Caco-2 (cell line): ENCODE measurements at regions of chr2 and their contacts with region 1.

Region 1: GRCh38 chr2:108448678-108449493 is at the start of gene GCC2:
- DNase-seq: peak; percentile 97
- H3K4me3 ChIP-seq: peak within 1 kb of the TSS; percentile 83
- H3K4me3 Mint-ChIP-seq: peak within 1 kb of the TSS; percentile 93
- H3K27ac Mint-ChIP-seq: peak within 1 kb of the TSS; percentile 94
- H3K4me1 ChIP-seq: peaks cover 7% of the 10 kb centered on the region; the same call in 1 of the 2 replicates
- H3K4me1 Mint-ChIP-seq: no peaks in the 10 kb centered on the region
- H3K27me3 ChIP-seq: no peaks in the 10 kb centered on the region
- H3K27me3 Mint-ChIP-seq: no peaks in the 10 kb centered on the region
- CTCF ChIP-seq: no peak
- total RNA-seq, gene GCC2: 46.2 and 49.9 TPM in 2 replicates

Region 2: DNA sequence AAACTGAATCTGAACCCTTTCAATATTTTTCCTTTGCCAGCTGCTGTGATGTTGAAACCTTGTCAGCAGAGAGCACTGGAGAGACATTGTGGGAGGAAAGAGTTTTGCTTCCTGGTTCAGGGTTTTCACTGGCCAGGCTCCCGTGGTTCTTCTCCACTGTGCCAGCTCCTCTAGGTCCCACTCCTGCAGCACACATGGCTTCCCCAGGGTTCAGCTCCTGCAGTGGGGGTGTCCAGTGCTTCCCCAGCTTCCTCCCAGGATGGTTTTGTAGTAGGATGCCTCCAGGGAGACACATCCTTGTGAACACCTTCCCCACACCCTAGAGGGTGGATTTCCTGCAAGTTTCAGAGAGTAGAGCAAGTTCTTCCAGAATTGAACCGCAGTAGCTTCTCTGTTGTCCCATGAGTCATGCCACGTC is 233.1 kb before region 1 on chr2:
- CTCF ChIA-PET with region 1: no interaction called
- POLR2A ChIA-PET with region 1: no interaction called
- intact Hi-C with region 1: loop called (anchors 2 kb)
- DNase-seq: peak; percentile 46 to 48
- H3K4me3 ChIP-seq: no peak overlapping the region
- H3K4me3 Mint-ChIP-seq: no peak overlapping the region
- H3K27ac Mint-ChIP-seq: no peak overlapping the region
- H3K4me1 ChIP-seq: peaks cover 5% of the 10 kb centered on the region; the same call in 1 of the 2 replicates
- H3K4me1 Mint-ChIP-seq: no peaks in the 10 kb centered on the region
- H3K27me3 ChIP-seq: no peaks in the 10 kb centered on the region
- H3K27me3 Mint-ChIP-seq: no peaks in the 10 kb centered on the region
- CTCF ChIP-seq: peak; percentile 23 to 49

Region 3: GRCh38 chr2:108377815-108378630 is 70.9 kb before region 1 on chr2 and contains the start of gene SULT1C4:
- CTCF ChIA-PET with region 1: no interaction called
- POLR2A ChIA-PET with region 1: no interaction called
- intact Hi-C with region 1: loop called (anchors 5 kb)
- DNase-seq: peak; percentile 42 to 53
- H3K4me3 ChIP-seq: peak within 1 kb of the TSS; percentile 25
- H3K4me3 Mint-ChIP-seq: peak within 1 kb of the TSS; percentile 69
- H3K27ac Mint-ChIP-seq: peak within 1 kb of the TSS; percentile 70
- H3K4me1 ChIP-seq: no peaks in the 10 kb centered on the region
- H3K4me1 Mint-ChIP-seq: peaks cover 19% of the 10 kb centered on the region
- H3K27me3 ChIP-seq: no peaks in the 10 kb centered on the region
- H3K27me3 Mint-ChIP-seq: no peaks in the 10 kb centered on the region
- CTCF ChIP-seq: no peak
- total RNA-seq, gene SULT1C4: 4.0 and 5.1 TPM in 2 replicates

Region 4: DNA sequence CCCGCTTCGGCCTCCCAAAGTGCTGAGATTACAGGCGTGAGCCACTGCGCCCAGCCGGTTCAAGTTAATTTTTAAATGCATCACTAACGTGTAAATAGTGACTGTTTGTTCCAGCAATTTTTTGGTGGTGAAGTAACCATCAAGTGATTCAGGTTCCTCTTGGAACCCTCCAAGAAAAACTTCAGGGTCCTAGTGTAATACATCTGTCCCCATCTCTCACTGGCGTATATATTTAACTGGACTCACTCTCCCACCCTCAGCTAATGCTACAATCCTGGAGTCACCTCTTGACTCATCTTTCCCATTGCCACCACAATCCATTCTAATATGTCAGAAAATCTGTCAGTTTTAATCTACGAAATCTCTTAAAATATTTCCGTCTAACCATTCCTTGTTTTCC is 60.8 kb before region 1 on chr2:
- CTCF ChIA-PET with region 1: no interaction called
- POLR2A ChIA-PET with region 1: no interaction called
- intact Hi-C with region 1: no loop called
- DNase-seq: no peak
- H3K4me3 ChIP-seq: no peak overlapping the region
- H3K4me3 Mint-ChIP-seq: no peak overlapping the region
- H3K27ac Mint-ChIP-seq: no peak overlapping the region
- H3K4me1 ChIP-seq: peaks cover 17% of the 10 kb centered on the region
- H3K4me1 Mint-ChIP-seq: peaks cover 12% of the 10 kb centered on the region
- H3K27me3 ChIP-seq: no peaks in the 10 kb centered on the region
- H3K27me3 Mint-ChIP-seq: no peaks in the 10 kb centered on the region
- CTCF ChIP-seq: no peak

Region 5: GRCh38 chr2:108412995-108413710 is 35.7 kb before region 1 on chr2:
- CTCF ChIA-PET with region 1: no interaction called
- POLR2A ChIA-PET with region 1: no interaction called
- intact Hi-C with region 1: no loop called
- DNase-seq: peak; percentile 13 to 46
- H3K4me3 ChIP-seq: no peak overlapping the region
- H3K4me3 Mint-ChIP-seq: no peak overlapping the region
- H3K27ac Mint-ChIP-seq: no peak overlapping the region
- H3K4me1 ChIP-seq: no peaks in the 10 kb centered on the region
- H3K4me1 Mint-ChIP-seq: no peaks in the 10 kb centered on the region
- H3K27me3 ChIP-seq: no peaks in the 10 kb centered on the region
- H3K27me3 Mint-ChIP-seq: no peaks in the 10 kb centered on the region
- CTCF ChIP-seq: no peak

Region 6: DNA sequence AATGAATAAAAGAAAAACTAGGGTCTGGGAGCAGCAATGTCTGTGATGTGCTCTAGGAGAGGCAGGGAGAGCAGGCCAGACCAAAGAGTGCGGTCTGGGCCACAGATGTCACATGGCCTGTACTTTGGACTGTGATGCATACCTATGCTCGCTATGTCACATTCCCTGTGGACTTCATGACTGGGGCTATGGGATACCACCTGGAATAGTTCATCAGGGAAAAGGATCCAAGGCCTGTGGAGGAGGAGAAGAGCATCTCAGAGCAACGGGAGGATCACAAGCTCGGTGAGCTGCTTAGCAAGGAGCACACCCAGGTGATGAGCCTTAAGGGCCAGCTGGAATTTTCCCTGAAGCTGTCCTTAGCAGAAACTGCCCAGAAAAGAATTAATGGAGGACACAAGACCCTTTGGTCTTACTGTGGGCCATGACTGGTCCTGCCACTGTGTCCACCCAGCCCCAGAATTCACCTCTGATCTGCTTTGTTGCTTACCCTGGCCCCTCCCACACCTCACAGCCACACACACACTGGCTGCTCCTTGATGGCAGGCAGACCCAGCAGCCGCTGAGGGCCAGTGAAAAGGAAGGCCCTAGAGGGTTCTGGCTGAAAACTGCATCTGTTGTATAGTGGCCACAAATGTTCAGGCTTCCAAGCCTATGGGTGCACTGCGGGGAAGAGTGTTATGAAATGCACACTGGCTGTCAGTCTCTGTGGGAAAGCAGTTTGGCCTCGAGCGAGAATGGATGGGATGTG is 25.2 kb before region 1 on chr2:
- CTCF ChIA-PET with region 1: no interaction called
- POLR2A ChIA-PET with region 1: no interaction called
- intact Hi-C with region 1: loop called (anchors 1 kb)
- DNase-seq: peak; percentile 70 to 84
- H3K4me3 ChIP-seq: no peak overlapping the region
- H3K4me3 Mint-ChIP-seq: peak overlapping the region; percentile 1
- H3K27ac Mint-ChIP-seq: peak overlapping the region; percentile 17
- H3K4me1 ChIP-seq: peaks cover 22% of the 10 kb centered on the region
- H3K4me1 Mint-ChIP-seq: peaks cover 27% of the 10 kb centered on the region
- H3K27me3 ChIP-seq: no peaks in the 10 kb centered on the region
- H3K27me3 Mint-ChIP-seq: no peaks in the 10 kb centered on the region
- CTCF ChIP-seq: no peak

Region 7: GRCh38 chr2:108533832-108534583 is 85.1 kb after region 1 on chr2 and contains the start of gene LIMS1:
- CTCF ChIA-PET with region 1: no interaction called
- POLR2A ChIA-PET with region 1: interaction called, 9 read pairs
- intact Hi-C with region 1: loop called (anchors 2 kb)
- DNase-seq: peak; percentile 92
- H3K4me3 ChIP-seq: peak within 1 kb of the TSS; percentile 95
- H3K4me3 Mint-ChIP-seq: peak within 1 kb of the TSS; percentile 84
- H3K27ac Mint-ChIP-seq: peak within 1 kb of the TSS; percentile 91
- H3K4me1 ChIP-seq: peaks cover 45% of the 10 kb centered on the region
- H3K4me1 Mint-ChIP-seq: peaks cover 30% of the 10 kb centered on the region
- H3K27me3 ChIP-seq: no peaks in the 10 kb centered on the region
- H3K27me3 Mint-ChIP-seq: no peaks in the 10 kb centered on the region
- CTCF ChIP-seq: no peak
- total RNA-seq, gene LIMS1: 67.2 and 75.2 TPM in 2 replicates

Region 8: GRCh38 chr2:108607706-108608301 is 158.9 kb after region 1 on chr2:
- CTCF ChIA-PET with region 1: no interaction called
- POLR2A ChIA-PET with region 1: no interaction called
- intact Hi-C with region 1: no loop called
- DNase-seq: peak in 1 of 2 experiments; percentile 35
- H3K4me3 ChIP-seq: no peak overlapping the region
- H3K4me3 Mint-ChIP-seq: no peak overlapping the region
- H3K27ac Mint-ChIP-seq: no peak overlapping the region
- H3K4me1 ChIP-seq: peaks cover 6% of the 10 kb centered on the region; the same call in 1 of the 2 replicates
- H3K4me1 Mint-ChIP-seq: peaks cover 7% of the 10 kb centered on the region
- H3K27me3 ChIP-seq: no peaks in the 10 kb centered on the region
- H3K27me3 Mint-ChIP-seq: no peaks in the 10 kb centered on the region
- CTCF ChIP-seq: peak; percentile 66 to 70